Naive thymus-derived CD4-positive, alpha-beta T cell (primary cell): ENCODE measurements at regions of chr2 and their contacts with region 1.

Region 1: DNA sequence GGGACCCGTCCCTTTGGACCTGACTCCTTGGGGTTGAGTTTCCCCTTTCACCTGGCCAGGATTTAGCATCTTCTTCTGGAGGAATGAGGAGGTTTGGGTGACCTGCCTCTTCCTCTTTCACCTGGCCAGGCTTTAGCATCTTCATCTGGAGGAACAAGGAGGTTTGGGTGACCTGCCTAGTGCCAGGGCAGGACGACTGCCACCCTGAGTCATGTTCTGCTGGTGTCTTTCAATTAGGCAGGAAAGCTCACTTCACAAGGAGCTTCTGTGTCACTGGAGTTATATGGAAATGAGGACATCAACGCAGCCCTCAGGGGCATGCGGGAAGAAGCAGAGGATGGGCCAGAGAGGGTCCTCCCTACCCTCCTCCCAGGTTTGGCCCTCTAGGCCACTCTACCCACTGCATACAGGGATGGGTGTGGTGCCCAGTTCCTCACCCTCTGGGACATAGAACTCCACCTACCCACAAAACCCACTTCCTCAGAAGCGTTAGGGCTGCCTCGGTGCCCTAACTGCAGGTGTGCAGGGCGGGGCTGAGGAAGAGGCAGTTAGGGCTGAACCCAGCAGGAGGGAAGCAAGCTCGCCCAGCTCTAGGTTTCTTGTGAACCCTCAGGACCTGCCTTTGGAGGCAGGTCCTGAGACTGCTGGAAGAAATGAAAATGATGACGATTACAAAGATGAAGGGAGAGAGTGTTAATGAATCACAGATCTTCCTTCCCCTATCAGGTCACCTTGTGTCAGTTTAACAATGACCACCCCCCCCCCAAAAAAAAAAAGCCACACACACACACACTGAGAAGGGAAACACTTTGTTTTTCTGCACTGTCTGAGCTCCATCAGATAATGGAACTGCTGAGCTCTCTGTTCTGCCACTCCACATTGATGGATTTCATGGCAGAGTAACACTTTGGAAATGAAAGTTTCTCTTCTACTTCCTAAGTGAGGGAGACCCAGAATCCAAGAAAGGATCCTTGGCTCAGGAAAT is 71.0 kb downstream of the ARL4C start:
- DNase-seq: peak; percentile 53 to 93 (median 92)
- ATAC-seq: peak; percentile 84
- H3K4me3 ChIP-seq: peak overlapping the region; percentile 43
- H3K4me3 Mint-ChIP-seq: peak overlapping the region; percentile 73 to 87 (median 82)
- H3K27ac ChIP-seq: peak overlapping the region; percentile 93
- H3K27ac Mint-ChIP-seq: peak overlapping the region; percentile 97 to 100 (median 100)
- H3K4me1 ChIP-seq: peaks cover 86 to 92% of the 10 kb centered on the region in 2 donors
- H3K4me1 Mint-ChIP-seq: peaks cover 70 to 100% (median 91%) of the 10 kb centered on the region in 7 donors
- H3K27me3 ChIP-seq: no peaks in the 10 kb centered on the region
- H3K27me3 Mint-ChIP-seq: no peaks in the 10 kb centered on the region

Region 2: DNA sequence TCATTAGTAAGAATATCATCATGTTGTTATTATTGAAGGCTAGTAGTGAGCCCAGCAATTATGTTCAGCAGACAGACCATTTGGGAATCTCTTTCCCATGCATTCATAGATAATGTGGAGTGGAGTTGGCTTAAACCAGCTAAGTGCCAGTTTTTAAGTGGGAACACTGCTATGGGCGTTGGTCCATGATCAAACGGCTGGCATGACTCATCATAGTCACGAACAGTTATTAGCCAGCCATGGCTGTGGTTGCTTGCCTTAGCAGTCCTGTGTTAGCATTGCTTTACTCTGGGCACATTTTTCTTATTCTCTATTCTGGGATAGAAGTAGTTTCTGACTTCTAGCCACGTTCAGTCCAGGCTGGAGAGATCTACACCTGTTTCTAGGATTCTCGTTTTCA is 1857.8 kb before region 1 on chr2:
- CTCF ChIA-PET with region 1: no interaction called
- POLR2A ChIA-PET with region 1: no interaction called
- intact Hi-C with region 1: no loop called
- DNase-seq: no peak
- ATAC-seq: no peak
- H3K4me3 ChIP-seq: no peak overlapping the region
- H3K4me3 Mint-ChIP-seq: no peak overlapping the region
- H3K27ac ChIP-seq: no peak overlapping the region
- H3K27ac Mint-ChIP-seq: no peak overlapping the region
- H3K4me1 ChIP-seq: no peaks in the 10 kb centered on the region
- H3K4me1 Mint-ChIP-seq: peaks cover 0 to 7% (median 0%) of the 10 kb centered on the region in 7 donors
- H3K27me3 ChIP-seq: no peaks in the 10 kb centered on the region
- H3K27me3 Mint-ChIP-seq: no peaks in the 10 kb centered on the region

Region 3: DNA sequence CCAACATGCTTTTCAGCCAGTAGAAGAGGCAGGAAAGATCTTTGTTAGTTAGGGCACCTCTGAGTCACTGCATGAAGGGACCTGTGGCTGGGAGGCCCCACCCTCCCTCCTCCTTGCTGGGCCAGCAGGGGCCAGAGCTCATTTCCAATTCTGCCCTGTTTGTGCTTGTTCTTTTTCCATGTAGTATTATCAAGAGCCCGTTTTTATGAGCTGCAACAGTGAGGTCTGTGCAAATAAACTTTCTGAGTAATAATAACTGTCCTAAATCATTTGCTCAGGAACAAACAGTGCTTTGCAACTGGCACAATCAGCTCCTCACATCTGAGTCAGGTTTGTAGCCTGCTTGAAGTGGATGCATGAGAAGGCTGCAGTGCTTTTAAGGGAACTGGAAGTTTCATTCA is 57.0 kb before region 1 on chr2:
- CTCF ChIA-PET with region 1: interaction called, 4 read pairs
- POLR2A ChIA-PET with region 1: interaction called, 13 read pairs
- intact Hi-C with region 1: loop called (anchors 1 to 2 kb)
- DNase-seq: peak in 7 of 9 donors; percentile 13 to 43 (median 28)
- ATAC-seq: peak; percentile 78
- H3K4me3 ChIP-seq: no peak overlapping the region
- H3K4me3 Mint-ChIP-seq: peak overlapping the region; percentile 6 to 80 (median 46)
- H3K27ac ChIP-seq: peak overlapping the region; percentile 48
- H3K27ac Mint-ChIP-seq: peak overlapping the region; percentile 81 to 98 (median 90)
- H3K4me1 ChIP-seq: peaks cover 31 to 71% of the 10 kb centered on the region in 2 donors
- H3K4me1 Mint-ChIP-seq: peaks cover 47 to 86% (median 80%) of the 10 kb centered on the region in 7 donors
- H3K27me3 ChIP-seq: no peaks in the 10 kb centered on the region
- H3K27me3 Mint-ChIP-seq: no peaks in the 10 kb centered on the region

Region 4: DNA sequence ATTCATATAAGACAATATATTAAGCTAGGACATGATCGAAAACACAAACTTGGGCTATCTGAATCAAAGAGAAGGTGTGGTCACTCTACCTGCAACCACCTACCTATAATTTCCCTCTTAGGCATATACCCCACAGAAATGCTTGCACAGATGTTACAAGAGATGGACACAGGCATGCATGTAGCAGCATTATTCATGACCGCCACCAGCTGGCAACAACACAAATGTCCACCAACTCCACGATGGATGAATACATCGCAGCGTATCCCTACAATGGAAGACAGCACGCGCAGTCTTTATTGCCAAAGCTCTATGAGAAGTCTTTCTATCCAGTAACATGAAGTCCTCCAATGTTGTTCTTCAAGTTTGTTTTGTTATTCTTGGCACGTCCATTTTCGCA is 19.8 kb before region 1 on chr2:
- CTCF ChIA-PET with region 1: no interaction called
- POLR2A ChIA-PET with region 1: interaction called, 33 read pairs
- intact Hi-C with region 1: loop called (anchors 1 to 2 kb)
- DNase-seq: no peak
- ATAC-seq: no peak
- H3K4me3 ChIP-seq: no peak overlapping the region
- H3K4me3 Mint-ChIP-seq: no peak overlapping the region
- H3K27ac ChIP-seq: no peak overlapping the region
- H3K27ac Mint-ChIP-seq: peak overlapping the region in 1 of 9 donors; percentile 55
- H3K4me1 ChIP-seq: peaks cover 6 to 7% of the 10 kb centered on the region in 2 donors
- H3K4me1 Mint-ChIP-seq: peaks cover 16 to 63% (median 57%) of the 10 kb centered on the region in 7 donors
- H3K27me3 ChIP-seq: no peaks in the 10 kb centered on the region
- H3K27me3 Mint-ChIP-seq: no peaks in the 10 kb centered on the region

Region 5: DNA sequence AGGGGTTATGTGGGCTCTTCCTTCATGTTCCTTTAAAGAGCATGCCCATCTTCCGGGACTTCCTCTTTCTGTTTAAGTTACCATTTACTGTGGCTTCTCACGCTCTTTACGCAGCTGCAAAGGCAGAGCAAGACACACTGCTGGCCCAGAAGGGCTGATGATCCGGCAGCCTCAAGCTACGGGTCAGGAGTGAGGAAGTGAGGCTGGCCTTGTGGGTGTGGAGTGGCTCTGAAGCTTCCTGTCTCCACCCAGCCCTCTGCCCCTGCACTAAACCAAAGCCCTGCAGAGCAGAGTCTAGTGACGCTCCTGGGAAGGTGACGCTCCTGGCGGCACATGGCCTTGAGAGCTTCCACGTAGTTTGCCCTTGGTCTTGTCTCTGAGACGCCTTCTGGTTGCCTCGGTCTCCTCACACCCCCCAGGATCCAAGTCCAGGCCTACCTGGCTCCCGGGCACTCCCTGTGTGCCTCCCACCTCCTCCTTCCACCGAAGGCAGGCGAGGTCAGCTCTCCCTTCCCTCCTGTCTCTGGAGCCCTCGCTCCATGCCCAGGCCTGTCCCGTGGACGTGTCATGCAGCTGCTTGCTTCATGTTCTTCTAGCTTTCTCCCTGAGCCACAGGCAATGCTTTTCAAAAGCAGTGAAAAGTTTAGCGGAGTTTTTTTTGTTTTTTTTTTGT is 20.6 kb after region 1 on chr2:
- CTCF ChIA-PET with region 1: interaction called, 7 read pairs
- POLR2A ChIA-PET with region 1: interaction called, 643 read pairs
- intact Hi-C with region 1: loop called (anchors 1 kb)
- DNase-seq: peak; percentile 58 to 89 (median 85)
- ATAC-seq: peak; percentile 92
- H3K4me3 ChIP-seq: peak overlapping the region; percentile 29
- H3K4me3 Mint-ChIP-seq: peak overlapping the region; percentile 71 to 99 (median 86)
- H3K27ac ChIP-seq: peak overlapping the region; percentile 96
- H3K27ac Mint-ChIP-seq: peak overlapping the region; percentile 96 to 100 (median 100)
- H3K4me1 ChIP-seq: peaks cover 57 to 93% of the 10 kb centered on the region in 2 donors
- H3K4me1 Mint-ChIP-seq: peaks cover 60 to 98% (median 89%) of the 10 kb centered on the region in 7 donors
- H3K27me3 ChIP-seq: no peaks in the 10 kb centered on the region
- H3K27me3 Mint-ChIP-seq: no peaks in the 10 kb centered on the region

Region 6: GRCh38 chr2:234483568-234484251 is 57.8 kb after region 1 on chr2:
- CTCF ChIA-PET with region 1: interaction called, 13 read pairs
- POLR2A ChIA-PET with region 1: interaction called, 27 read pairs
- intact Hi-C with region 1: loop called (anchors 1 kb)
- DNase-seq: peak; percentile 50 to 88 (median 80)
- ATAC-seq: peak; percentile 89
- H3K4me3 ChIP-seq: peak overlapping the region; percentile 28
- H3K4me3 Mint-ChIP-seq: peak overlapping the region; percentile 60 to 81 (median 67)
- H3K27ac ChIP-seq: peak overlapping the region; percentile 94
- H3K27ac Mint-ChIP-seq: peak overlapping the region; percentile 87 to 99 (median 95)
- H3K4me1 ChIP-seq: peaks cover 63 to 72% of the 10 kb centered on the region in 2 donors
- H3K4me1 Mint-ChIP-seq: peaks cover 44 to 95% (median 84%) of the 10 kb centered on the region in 7 donors
- H3K27me3 ChIP-seq: no peaks in the 10 kb centered on the region
- H3K27me3 Mint-ChIP-seq: no peaks in the 10 kb centered on the region

Region 7: GRCh38 chr2:234500394-234501006 is 74.6 kb after region 1 on chr2:
- CTCF ChIA-PET with region 1: interaction called, 6 read pairs
- POLR2A ChIA-PET with region 1: interaction called, 99 read pairs
- intact Hi-C with region 1: no loop called
- DNase-seq: peak; percentile 39 to 83 (median 77)
- ATAC-seq: peak; percentile 68
- H3K4me3 ChIP-seq: peak overlapping the region; percentile 32
- H3K4me3 Mint-ChIP-seq: peak overlapping the region; percentile 44 to 91 (median 73)
- H3K27ac ChIP-seq: peak overlapping the region; percentile 91
- H3K27ac Mint-ChIP-seq: peak overlapping the region; percentile 56 to 98 (median 92)
- H3K4me1 ChIP-seq: peaks cover 24 to 30% of the 10 kb centered on the region in 2 donors
- H3K4me1 Mint-ChIP-seq: peaks cover 17 to 34% (median 31%) of the 10 kb centered on the region in 7 donors
- H3K27me3 ChIP-seq: no peaks in the 10 kb centered on the region
- H3K27me3 Mint-ChIP-seq: peaks cover 0 to 34% (median 0%) of the 10 kb centered on the region in 5 donors

Region 8: GRCh38 chr2:235390103-235390812 is 964.3 kb after region 1 on chr2:
- CTCF ChIA-PET with region 1: no interaction called
- POLR2A ChIA-PET with region 1: no interaction called
- intact Hi-C with region 1: no loop called
- DNase-seq: peak in 8 of 9 donors; percentile 1 to 65 (median 36)
- ATAC-seq: peak; percentile 72
- H3K4me3 ChIP-seq: no peak overlapping the region
- H3K4me3 Mint-ChIP-seq: peak overlapping the region in 9 of 10 donors; percentile 4 to 66 (median 57)
- H3K27ac ChIP-seq: no peak overlapping the region
- H3K27ac Mint-ChIP-seq: peak overlapping the region in 4 of 9 donors; percentile 17 to 37 (median 21)
- H3K4me1 ChIP-seq: peaks cover 11 to 14% of the 10 kb centered on the region in 2 donors
- H3K4me1 Mint-ChIP-seq: peaks cover 10 to 18% (median 13%) of the 10 kb centered on the region in 7 donors
- H3K27me3 ChIP-seq: no peaks in the 10 kb centered on the region
- H3K27me3 Mint-ChIP-seq: peaks cover 0 to 10% (median 4%) of the 10 kb centered on the region in 5 donors